ENCODE measurements at regions of chr2 and their contacts with region 1.

Region 1: GRCh38 chr2:68943581-68944568 is 8.8 kb downstream of the GKN2 start:
- DNase-seq: peak; percentile 29 to 62 (median 46)
- ATAC-seq: peak; percentile 88
- H3K4me3 ChIP-seq: no peak overlapping the region
- H3K27ac ChIP-seq: no peak overlapping the region
- H3K4me1 ChIP-seq: peaks cover 0 to 3% of the 10 kb centered on the region in 2 experiments; a peak in 1 of 5 replicates
- H3K27me3 ChIP-seq: 0 out of 5 replicates have a peak, but pooled peaks cover 0 to 3% of the 10 kb centered on the region in 2 experiments
- CTCF ChIP-seq: peak; percentile 76 to 83 (median 82)
- EP300 ChIP-seq: no peak
- POLR2A ChIP-seq: no peak
- RAD21 ChIP-seq: peak; percentile 50 to 76

Region 2: DNA sequence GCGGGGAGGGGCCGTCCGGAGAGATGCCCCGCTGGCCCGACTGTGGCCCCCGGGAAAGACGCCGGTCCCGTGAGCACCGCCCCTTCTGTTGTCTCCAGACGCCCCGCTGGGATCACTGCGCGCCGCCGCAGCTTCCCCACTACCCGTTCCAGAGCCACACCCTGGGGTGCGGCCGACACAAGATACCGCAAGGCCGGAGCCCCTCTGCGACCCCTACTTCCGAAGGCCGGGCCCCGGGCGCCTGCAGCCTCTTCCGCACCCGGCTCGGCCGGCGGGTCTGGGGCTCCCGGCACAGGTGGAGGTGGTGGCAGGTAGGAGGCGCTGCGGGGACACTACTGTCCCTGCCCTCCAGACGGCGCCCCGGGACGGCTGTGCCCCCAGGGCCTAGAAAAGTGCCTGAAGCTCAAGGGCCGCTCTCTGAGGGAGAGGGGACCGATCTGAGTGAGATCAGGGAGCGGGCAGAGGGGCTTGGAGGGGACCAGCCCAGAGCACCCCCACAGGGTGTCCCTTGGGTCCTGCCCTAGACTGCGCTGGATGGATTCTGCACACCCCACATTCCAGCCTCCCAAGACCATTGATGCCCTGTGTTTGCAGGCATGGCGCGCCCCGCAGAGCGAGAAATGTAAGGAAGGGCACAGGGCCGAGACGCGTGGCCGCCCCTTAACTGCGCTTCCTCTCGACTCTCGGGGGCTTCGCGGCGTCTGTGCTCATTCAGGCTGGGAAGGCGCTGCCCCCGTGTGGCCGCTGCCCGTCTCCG is 363.1 kb after region 1 on chr2:
- CTCF ChIA-PET with region 1: no interaction called
- POLR2A ChIA-PET with region 1: no interaction called
- in situ Hi-C with region 1: no loop called
- intact Hi-C with region 1: loop called (anchors 10 kb)
- DNase-seq: peak; percentile 80 to 87 (median 85)
- ATAC-seq: peak; percentile 96
- H3K4me3 ChIP-seq: peak overlapping the region; percentile 35
- H3K27ac ChIP-seq: no peak overlapping the region
- H3K4me1 ChIP-seq: peaks cover 0 to 18% of the 10 kb centered on the region in 2 experiments; a peak in 3 of 5 replicates
- H3K27me3 ChIP-seq: peaks cover 13 to 30% of the 10 kb centered on the region in 2 experiments; a peak in 4 of 5 replicates
- CTCF ChIP-seq: peak; percentile 84 to 99 (median 90)
- EP300 ChIP-seq: no peak
- POLR2A ChIP-seq: no peak
- RAD21 ChIP-seq: peak; percentile 86 to 90

Measured in K562 (cell line).